Body of pancreas (tissue), 4 donors: ENCODE measurements at regions of chr10 and their contacts with region 1.

Region 1: GRCh38 chr10:57338823-57339558 is 928.7 kb downstream of the IPMK start:
- DNase-seq: peak in 3 of 4 donors; percentile 8 to 31 (median 18)
- ATAC-seq: peak; percentile 50
- H3K4me3 ChIP-seq: no peak overlapping the region
- H3K27ac ChIP-seq: no peak overlapping the region
- H3K4me1 ChIP-seq: no peaks in the 10 kb centered on the region
- H3K27me3 ChIP-seq: no peaks in the 10 kb centered on the region
- CTCF ChIP-seq: peak; percentile 50 to 73 (median 69)
- POLR2A ChIP-seq: no peak

Region 2: GRCh38 chr10:57430376-57430775 is 91.4 kb after region 1 on chr10:
- intact Hi-C with region 1: no loop called
- DNase-seq: no peak
- ATAC-seq: no peak
- H3K4me3 ChIP-seq: no peak overlapping the region
- H3K27ac ChIP-seq: no peak overlapping the region
- H3K4me1 ChIP-seq: no peaks in the 10 kb centered on the region
- H3K27me3 ChIP-seq: no peaks in the 10 kb centered on the region
- CTCF ChIP-seq: no peak
- POLR2A ChIP-seq: no peak

Region 3: GRCh38 chr10:57535306-57535705 is 196.3 kb after region 1 on chr10:
- intact Hi-C with region 1: no loop called
- DNase-seq: no peak
- ATAC-seq: no peak
- H3K4me3 ChIP-seq: no peak overlapping the region
- H3K27ac ChIP-seq: no peak overlapping the region
- H3K4me1 ChIP-seq: no peaks in the 10 kb centered on the region
- H3K27me3 ChIP-seq: no peaks in the 10 kb centered on the region
- CTCF ChIP-seq: no peak
- POLR2A ChIP-seq: no peak

Region 4: DNA sequence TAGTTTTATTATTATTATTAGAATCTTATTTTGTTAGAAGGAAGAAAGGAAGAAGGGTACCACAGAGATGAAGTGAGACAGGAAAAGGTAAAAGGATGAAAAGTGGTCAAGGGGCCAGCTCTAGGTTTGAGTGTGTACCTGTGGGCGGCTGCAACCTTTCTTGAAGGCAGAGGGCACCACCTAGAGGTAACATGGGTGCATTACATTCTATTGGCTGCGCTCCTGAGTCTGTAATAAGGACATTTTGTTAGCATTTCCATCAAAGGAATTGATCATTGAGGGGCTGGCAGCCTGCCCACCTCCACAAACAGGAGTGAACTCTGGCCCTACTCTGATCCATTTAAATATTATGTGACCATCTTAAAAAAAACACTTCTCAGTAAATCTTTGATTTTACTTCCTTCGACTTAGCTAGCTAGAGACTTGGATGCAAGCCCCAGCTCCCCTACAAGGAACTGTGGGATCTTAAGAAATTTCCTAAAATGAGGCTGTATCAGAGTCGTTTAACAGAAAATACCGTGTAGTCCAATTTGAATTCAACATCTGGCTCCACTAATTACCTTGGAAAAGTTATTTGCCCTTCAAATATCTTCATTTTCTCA is 318.3 kb after region 1 on chr10:
- intact Hi-C with region 1: loop called (anchors 10 kb)
- DNase-seq: peak; percentile 52 to 73 (median 62)
- ATAC-seq: peak; percentile 75
- H3K4me3 ChIP-seq: no peak overlapping the region
- H3K27ac ChIP-seq: no peak overlapping the region
- H3K4me1 ChIP-seq: no peaks in the 10 kb centered on the region
- H3K27me3 ChIP-seq: no peaks in the 10 kb centered on the region
- CTCF ChIP-seq: peak; percentile 55 to 82 (median 78)
- POLR2A ChIP-seq: no peak

Region 5: DNA sequence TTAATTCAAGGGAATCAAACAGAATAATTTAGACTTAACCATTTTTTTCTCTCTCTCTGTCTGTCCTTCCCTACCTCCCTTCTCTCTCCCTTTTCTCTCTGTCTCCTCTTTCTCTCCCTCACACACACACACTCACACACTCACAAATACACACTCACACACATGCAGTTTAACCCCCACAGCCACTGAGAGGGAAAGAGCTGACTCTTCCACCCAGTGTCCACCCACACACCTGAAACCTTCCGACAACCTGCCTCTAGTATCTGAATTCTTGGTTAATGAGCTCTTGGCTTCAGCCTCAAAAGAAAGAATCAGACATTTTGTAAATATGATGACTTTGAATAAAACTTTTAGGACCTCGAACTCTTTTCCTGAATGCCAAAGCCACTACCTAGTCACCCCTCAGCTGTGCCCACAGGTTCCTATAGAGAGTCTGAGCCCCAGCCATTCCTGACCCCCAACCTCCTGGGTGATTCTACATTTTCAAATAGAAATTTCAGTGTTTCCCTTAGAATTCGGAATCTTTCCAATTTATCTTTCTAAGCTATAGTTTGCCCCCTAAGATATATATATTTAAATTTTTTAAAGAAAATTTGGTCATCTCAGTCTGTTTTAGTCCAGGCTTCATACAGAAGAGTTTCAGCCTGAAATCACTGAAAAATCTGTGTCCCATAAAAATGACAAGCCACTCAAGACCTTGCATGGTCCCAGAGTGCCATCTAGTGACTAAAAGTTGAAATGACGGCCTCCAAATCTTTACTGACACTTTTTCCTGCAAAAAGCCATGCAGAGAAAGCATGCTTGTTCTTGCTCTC is 725.9 kb after region 1 on chr10:
- intact Hi-C with region 1: loop called (anchors 10 kb)
- DNase-seq: peak in 1 of 4 donors; percentile 22
- ATAC-seq: peak; percentile 56
- H3K4me3 ChIP-seq: no peak overlapping the region
- H3K27ac ChIP-seq: no peak overlapping the region
- H3K4me1 ChIP-seq: no peaks in the 10 kb centered on the region
- H3K27me3 ChIP-seq: no peaks in the 10 kb centered on the region
- CTCF ChIP-seq: peak; percentile 38 to 83 (median 80)
- POLR2A ChIP-seq: no peak